Activated CD4-positive, alpha-beta T cell treated with anti-CD3 and anti-CD28 coated beads for 36 hours (primary cell): ENCODE measurements at regions of chr9 and their contacts with region 1.

Region 1: DNA sequence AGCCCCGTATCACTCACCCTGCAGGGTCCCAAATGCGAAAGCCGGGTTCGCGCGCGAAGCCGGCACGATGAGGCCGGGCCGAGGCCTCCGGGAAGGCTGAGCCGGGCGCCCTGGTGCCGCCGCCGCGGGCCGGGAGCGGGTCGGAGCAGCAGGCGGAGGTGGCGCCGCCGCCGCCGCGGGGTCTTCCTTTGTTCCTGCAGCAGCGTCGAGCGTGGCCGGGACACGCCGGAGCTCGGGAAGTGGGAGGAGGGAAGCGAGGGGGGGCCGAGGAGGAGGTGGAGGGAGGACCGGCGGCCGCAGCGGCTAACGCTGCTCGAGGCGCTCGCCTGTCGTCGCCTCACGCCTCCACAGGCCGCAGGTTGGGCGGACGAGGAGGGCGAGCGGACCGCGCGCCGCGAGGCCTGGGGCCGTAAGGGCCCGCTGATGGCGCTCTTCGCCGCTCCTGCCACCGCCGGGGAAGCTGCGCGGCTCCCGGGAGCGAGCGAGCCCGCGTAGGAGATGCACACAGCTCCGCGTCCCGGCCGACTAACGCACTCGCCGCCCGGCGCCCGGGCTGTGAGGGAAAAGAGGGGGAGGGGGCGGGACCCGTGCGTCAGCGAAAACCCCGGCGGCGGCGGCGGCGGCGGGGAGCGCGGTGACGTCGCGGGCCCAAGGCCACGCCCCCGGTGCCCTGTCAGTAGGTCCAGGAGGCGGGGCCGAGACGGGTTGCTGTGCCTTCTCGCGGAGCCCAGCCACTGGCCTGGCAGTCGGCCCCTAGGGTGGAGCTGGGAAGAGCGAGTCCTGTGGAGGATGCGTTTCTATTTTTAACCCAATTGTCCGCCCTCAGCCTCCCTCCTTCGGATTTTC is at the start of gene ZFAND5:
- DNase-seq: peak; percentile 97
- ATAC-seq: peak; percentile 84
- H3K4me3 Mint-ChIP-seq: peak within 1 kb of the TSS; percentile 91
- H3K27ac Mint-ChIP-seq: peak within 1 kb of the TSS; percentile 99
- H3K4me1 Mint-ChIP-seq: peaks cover 37% of the 10 kb centered on the region
- H3K27me3 Mint-ChIP-seq: no peaks in the 10 kb centered on the region
- total RNA-seq, gene ZFAND5: 72.0 to 88.2 TPM

Region 2: GRCh38 chr9:72383978-72384709 is 19.2 kb after region 1 on chr9:
- CTCF ChIA-PET with region 1: no interaction called
- POLR2A ChIA-PET with region 1: interaction called, 3 read pairs
- intact Hi-C with region 1: loop called in 1 of 2 experiments (anchors 2 kb)
- DNase-seq: no peak
- ATAC-seq: no peak
- H3K4me3 Mint-ChIP-seq: no peak overlapping the region
- H3K27ac Mint-ChIP-seq: no peak overlapping the region
- H3K4me1 Mint-ChIP-seq: peaks cover 9% of the 10 kb centered on the region
- H3K27me3 Mint-ChIP-seq: peaks cover 2% of the 10 kb centered on the region

Region 3: DNA sequence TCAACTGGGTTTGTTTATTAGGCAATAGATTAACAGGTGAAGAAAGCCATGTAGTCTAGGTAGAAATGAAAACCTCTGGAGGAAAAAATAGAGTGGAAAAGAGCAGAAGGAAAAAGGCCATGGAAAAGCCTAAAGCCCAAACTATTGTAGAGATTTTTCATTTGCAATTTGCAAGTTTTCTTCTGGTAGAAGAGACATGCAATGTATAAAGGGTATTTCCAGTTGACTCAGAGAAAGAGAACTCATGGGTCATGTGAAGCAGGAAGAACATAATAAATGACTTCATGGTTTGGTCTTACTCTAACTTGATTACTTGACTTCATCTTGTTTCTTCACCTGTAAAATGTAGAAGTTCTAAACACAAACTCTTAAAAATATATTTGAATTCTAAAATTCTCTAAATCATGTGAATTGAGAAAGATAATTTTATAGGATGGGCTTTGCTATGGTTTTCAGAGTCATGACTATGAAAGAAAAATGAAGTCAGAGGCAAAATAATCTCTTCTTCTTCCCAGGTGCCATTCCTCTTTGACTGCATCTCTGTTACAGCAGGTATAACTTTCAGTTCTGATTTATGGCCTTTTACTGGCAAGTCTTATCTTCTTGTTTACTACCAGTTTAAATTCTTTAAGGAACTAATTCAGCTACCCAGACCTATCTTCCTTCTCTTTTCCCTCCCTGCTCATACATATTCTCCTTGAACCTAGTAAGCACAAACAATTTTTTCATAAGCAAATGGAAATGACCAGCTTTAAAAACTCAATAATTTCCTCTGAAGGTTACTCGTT is 108.8 kb after region 1 on chr9:
- CTCF ChIA-PET with region 1: interaction called, 3 read pairs
- POLR2A ChIA-PET with region 1: no interaction called
- intact Hi-C with region 1: loop called (anchors 2 kb)
- DNase-seq: no peak
- ATAC-seq: peak; percentile 83
- H3K4me3 Mint-ChIP-seq: no peak overlapping the region
- H3K27ac Mint-ChIP-seq: peak overlapping the region; percentile 88
- H3K4me1 Mint-ChIP-seq: peaks cover 40% of the 10 kb centered on the region
- H3K27me3 Mint-ChIP-seq: no peaks in the 10 kb centered on the region

Region 4: GRCh38 chr9:72615931-72616330 is 251.0 kb after region 1 on chr9:
- CTCF ChIA-PET with region 1: no interaction called
- POLR2A ChIA-PET with region 1: no interaction called
- intact Hi-C with region 1: no loop called
- DNase-seq: no peak
- ATAC-seq: no peak
- H3K4me3 Mint-ChIP-seq: no peak overlapping the region
- H3K27ac Mint-ChIP-seq: no peak overlapping the region
- H3K4me1 Mint-ChIP-seq: no peaks in the 10 kb centered on the region
- H3K27me3 Mint-ChIP-seq: peaks cover 3% of the 10 kb centered on the region

Region 5: GRCh38 chr9:73132034-73132776 is 767.3 kb after region 1 on chr9:
- CTCF ChIA-PET with region 1: no interaction called
- POLR2A ChIA-PET with region 1: no interaction called
- intact Hi-C with region 1: loop called in 1 of 2 experiments (anchors 5 kb)
- DNase-seq: peak; percentile 81
- ATAC-seq: peak; percentile 90
- H3K4me3 Mint-ChIP-seq: peak overlapping the region; percentile 72
- H3K27ac Mint-ChIP-seq: peak overlapping the region; percentile 86
- H3K4me1 Mint-ChIP-seq: peaks cover 37% of the 10 kb centered on the region
- H3K27me3 Mint-ChIP-seq: no peaks in the 10 kb centered on the region